Gastrocnemius medialis (tissue), 4 donors: ENCODE measurements at regions of chr22 and their contacts with region 1.

Region 1: DNA sequence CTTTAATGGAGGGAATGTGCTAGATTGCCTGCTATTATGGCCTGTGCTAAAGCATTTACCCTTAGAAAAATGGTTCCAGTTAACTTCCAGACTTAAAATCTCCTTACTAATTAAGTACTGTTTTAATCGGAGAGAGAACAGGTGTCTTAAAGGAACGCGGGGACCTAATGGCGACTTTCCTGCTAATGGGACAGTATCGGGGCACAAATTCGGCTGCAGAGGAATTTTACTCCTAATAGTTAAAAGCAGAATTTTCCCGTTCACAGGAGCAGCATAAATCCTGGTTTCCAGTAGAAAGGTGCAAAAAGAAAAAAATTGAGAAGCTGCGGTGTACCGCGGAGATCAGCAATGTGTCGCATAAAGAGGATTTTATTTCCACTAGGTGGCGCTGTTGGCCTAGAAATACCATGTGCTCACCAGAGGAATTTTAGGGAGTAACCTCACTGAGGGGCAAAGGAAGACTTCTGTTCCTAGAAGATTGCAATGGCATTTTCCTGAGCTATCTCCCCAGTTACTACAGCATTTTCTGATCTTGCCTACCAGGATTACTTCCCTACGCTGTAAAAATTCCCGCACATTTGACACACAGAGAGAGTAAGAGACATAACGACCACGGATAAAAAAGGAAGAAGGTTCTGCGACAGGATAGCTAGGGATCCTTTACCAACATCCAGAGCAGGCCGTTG is 44.5 kb downstream of the ZNF280B start:
- DNase-seq: peak in 1 of 2 donors; percentile 17
- ATAC-seq: peak; percentile 52 to 58
- H3K4me3 ChIP-seq: peak overlapping the region in 1 of 4 donors; percentile 16
- H3K27ac ChIP-seq: no peak overlapping the region
- H3K4me1 ChIP-seq: no peaks in the 10 kb centered on the region
- H3K27me3 ChIP-seq: peaks cover 0 to 28% (median 14%) of the 10 kb centered on the region in 3 donors
- CTCF ChIP-seq: peak; percentile 37 to 72 (median 59)
- POLR2A ChIP-seq: no peak

Region 2: GRCh38 chr22:22687638-22688500 is 223.9 kb after region 1 on chr22:
- in situ Hi-C with region 1: loop called in 1 of 4 experiments (anchors 25 kb)
- intact Hi-C with region 1: no loop called
- DNase-seq: no peak
- ATAC-seq: peak in 1 of 2 donors; percentile 56
- H3K4me3 ChIP-seq: no peak overlapping the region
- H3K27ac ChIP-seq: no peak overlapping the region
- H3K4me1 ChIP-seq: no peaks in the 10 kb centered on the region
- H3K27me3 ChIP-seq: no peaks in the 10 kb centered on the region
- CTCF ChIP-seq: peak in 3 of 5 experiments; percentile 26 to 66 (median 55)
- POLR2A ChIP-seq: no peak

Region 3: DNA sequence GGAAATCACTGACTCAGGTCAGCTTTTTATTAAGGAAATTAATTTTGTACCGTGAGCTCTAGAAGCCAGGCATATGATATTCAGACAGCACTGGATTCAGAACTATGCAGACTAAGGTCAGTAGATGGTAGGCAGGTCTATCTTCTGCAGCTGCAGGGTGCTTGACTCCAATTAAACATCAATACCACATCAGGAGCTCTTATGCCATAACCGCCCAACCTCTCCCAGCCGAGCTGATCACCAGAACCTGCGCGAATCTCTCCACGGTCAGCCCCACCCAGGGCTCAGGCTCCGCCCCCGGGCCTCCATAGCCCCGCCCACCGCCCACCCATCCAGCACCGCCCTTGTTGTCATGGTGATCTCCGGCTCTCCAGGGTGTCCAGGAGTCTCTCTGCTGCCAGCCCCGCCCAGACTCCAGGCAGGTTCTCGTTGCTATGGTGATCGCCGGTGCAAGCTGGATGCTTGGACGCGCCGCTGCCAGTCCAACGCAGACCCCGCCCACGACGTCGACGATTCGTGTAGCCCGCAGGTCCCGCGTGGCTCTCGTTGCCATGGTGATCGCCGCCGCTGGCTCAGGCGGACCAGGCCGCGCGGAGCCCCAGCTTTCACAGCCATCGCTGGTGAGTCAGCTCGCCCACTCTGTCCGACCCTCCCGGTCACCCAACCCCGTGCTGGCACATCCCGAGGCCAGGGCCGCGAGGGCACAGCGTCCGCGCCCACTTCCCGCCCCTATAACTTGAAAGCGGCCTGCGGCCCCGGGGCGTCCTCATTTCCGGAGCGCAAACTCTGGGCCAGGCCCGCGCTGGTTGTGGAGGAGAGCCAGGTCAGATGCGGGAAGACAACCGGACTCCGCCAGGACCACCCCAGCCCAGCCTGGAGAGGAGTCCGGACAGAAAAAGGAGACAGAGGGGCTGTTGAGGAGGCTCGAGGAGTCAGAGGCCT is 681.2 kb after region 1 on chr22 and contains the start of gene RAB36:
- in situ Hi-C with region 1: loop called in 1 of 4 experiments (anchors 25 kb)
- intact Hi-C with region 1: no loop called
- DNase-seq: peak; percentile 74 to 78
- ATAC-seq: peak; percentile 55
- H3K4me3 ChIP-seq: peak within 1 kb of the TSS; percentile 22 to 48 (median 44)
- H3K27ac ChIP-seq: peak within 1 kb of the TSS in 3 of 4 donors; percentile 2 to 38 (median 16)
- H3K4me1 ChIP-seq: peaks cover 8 to 10% of the 10 kb centered on the region in 2 donors
- H3K27me3 ChIP-seq: peaks cover 8 to 15% (median 8%) of the 10 kb centered on the region in 3 donors
- CTCF ChIP-seq: no peak
- POLR2A ChIP-seq: no peak
- total RNA-seq, gene RAB36: 0.35 to 0.55 TPM in 2 of 4 donors, not detected in the others